Mammary epithelial cell (primary cell): ENCODE measurements at regions of chr17 and their contacts with region 1.

Region 1: DNA sequence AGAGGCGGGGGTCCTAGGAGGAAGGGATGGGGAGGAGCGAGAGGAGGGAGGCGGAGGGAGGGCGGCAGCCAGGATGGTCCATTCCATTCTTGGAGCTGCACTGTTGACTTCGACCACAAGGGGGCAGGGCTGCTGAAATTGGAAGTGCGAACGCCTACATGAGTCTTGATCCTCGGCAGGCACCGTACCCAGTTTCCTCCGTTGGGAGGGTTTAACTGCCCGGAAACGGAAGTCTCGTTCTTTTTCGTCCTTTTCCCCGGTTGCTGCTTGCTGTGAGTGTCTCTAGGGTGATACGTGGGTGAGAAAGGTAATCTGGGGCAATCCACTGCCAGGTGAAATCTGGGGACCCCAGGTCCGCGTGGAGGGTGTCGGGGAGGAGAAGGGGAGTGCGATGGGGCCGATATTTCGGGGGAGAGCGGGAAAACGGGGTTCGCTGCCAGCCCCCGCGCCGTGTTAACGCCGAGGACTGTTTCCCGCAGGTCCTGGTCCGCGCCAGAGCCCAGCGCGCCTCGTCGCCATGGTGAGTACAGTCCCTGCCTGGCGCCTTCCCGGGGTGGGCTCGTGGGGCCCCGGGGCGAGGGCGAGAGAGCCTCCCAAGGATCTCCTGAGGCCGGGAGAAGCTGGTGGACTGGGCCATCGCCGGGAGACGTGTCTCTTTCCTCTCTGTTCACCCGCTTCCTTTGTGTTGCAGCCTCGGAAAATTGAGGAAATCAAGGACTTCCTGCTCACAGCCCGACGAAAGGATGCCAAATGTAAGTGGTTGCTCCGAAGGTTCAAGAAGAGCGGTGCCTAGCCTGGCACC is at the start of gene RPL38:
- DNase-seq: peak; percentile 91
- H3K4me3 ChIP-seq: peak within 1 kb of the TSS; percentile 76 to 93 (median 86)
- H3K27ac ChIP-seq: peak within 1 kb of the TSS; percentile 80
- H3K4me1 ChIP-seq: peaks cover 30% of the 10 kb centered on the region
- H3K27me3 ChIP-seq: peaks cover 3% of the 10 kb centered on the region
- CTCF ChIP-seq: peak; percentile 95 to 97
- total RNA-seq, gene RPL38: 487 to 802 TPM

Region 2: GRCh38 chr17:74163271-74163821 is 40.3 kb before region 1 on chr17:
- CTCF ChIA-PET with region 1: no interaction called
- dilution Hi-C with region 1: no loop called
- in situ Hi-C with region 1: no loop called
- intact Hi-C with region 1: no loop called
- DNase-seq: no peak
- H3K4me3 ChIP-seq: no peak overlapping the region
- H3K27ac ChIP-seq: no peak overlapping the region
- H3K4me1 ChIP-seq: no peaks in the 10 kb centered on the region
- H3K27me3 ChIP-seq: no peaks in the 10 kb centered on the region
- CTCF ChIP-seq: no peak

Region 3: DNA sequence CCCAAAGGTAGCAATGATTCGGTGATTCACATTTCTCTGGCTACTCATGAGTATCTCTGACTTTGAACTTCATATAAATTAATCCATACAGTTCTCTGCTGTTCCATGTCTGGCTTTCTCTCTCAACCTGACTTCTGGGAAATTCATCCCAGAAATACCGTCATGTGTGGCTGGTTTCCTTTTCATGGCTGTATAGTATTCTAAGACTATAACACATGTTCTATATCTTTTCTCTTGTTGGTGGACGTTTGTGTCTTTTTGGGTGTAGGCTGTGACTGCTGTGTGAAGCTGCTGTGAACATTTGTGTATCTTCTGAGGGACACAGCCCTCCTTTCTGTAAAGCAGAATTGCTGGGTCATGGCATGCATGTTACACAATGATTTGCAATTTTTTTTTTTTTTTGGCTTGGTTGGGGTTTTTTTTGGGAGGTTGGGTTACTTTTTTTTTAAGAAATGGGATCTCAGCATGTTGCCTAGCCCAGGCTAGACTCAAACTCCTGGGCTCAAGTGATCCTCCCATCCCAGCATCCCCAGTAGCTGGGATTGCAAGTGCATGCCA is 16.0 kb after region 1 on chr17:
- CTCF ChIA-PET with region 1: interaction called, 38 read pairs
- dilution Hi-C with region 1: no loop called
- in situ Hi-C with region 1: no loop called
- intact Hi-C with region 1: no loop called
- DNase-seq: no peak
- H3K4me3 ChIP-seq: no peak overlapping the region
- H3K27ac ChIP-seq: no peak overlapping the region
- H3K4me1 ChIP-seq: no peaks in the 10 kb centered on the region
- H3K27me3 ChIP-seq: no peaks in the 10 kb centered on the region
- CTCF ChIP-seq: no peak

Region 4: DNA sequence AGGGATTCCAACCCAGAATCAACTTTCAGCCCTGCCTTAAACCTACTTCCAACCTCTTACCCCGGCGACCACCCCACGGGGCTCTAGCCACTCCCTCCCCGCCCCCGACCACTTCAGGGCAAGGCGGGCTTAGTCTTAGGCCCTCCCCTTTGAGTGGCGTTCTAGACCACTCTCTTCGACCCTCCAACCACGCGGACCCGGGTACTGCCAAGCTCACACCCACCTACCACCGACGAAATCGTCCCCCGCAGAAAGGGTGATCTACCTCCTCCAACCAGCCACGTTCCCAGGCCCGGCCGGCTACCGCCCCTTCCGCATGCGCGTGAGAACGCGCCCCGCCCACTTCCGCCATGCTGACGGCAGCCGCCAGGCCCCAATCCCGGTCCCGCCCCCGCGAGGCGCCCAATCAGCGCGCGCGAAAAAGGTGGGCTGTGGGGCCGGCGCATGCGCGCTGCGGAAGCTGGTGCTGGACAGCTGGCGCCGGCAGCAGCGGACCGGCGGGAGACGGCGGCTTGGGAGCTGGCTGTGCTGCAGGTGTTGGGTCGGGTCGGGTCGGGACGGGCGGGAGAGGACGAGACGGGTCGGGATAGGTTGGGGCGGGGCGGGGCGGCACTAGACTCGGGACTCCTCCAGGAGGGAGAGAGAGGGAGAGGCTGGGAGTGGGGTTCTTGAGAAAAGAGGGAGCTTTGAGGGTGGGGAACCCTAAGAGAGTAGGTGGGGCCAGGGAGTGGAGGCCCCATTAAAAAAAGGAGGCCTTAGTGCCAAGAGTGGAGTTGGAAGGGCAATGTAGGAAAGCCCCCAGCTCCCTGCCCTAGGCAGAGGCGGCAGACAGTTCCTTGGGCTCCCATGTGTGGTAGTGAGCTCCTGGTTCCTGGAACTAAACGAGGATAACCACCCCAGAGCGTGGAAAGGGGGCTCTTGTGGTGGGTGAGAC is 572.7 kb after region 1 on chr17 and contains the start of gene NAT9:
- CTCF ChIA-PET with region 1: no interaction called
- dilution Hi-C with region 1: no loop called
- in situ Hi-C with region 1: no loop called
- intact Hi-C with region 1: loop called (anchors 10 kb)
- DNase-seq: peak; percentile 94
- H3K4me3 ChIP-seq: peak within 1 kb of the TSS; percentile 80 to 84 (median 80)
- H3K27ac ChIP-seq: peak within 1 kb of the TSS; percentile 72
- H3K4me1 ChIP-seq: peaks cover 5% of the 10 kb centered on the region
- H3K27me3 ChIP-seq: no peaks in the 10 kb centered on the region
- CTCF ChIP-seq: no peak
- total RNA-seq, gene NAT9: 24.7 to 76.5 TPM